CD4-positive, alpha-beta T cell (primary cell): ENCODE measurements at regions of chr20 and their contacts with region 1.

Region 1: DNA sequence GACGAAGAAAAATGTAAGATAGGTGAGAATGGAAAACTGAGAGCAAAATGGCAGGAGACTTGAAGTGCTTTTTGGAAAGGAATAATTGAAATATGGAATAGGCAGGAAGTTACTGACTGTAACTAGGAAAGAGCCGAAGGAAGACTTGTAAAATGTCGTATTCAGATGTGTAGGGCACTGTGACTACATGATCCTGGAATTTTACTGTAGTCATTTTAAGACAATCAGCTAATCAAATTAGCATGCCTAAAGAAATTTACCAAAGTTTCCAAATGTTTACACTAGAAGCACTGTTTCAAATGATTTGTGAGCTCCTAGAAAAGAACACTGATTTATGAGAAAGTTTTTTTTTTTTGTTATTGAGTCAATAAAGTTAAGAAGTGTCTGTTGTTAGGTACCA is 21.2 kb upstream of the ADIG start:
- DNase-seq: no peak
- ATAC-seq: no peak
- H3K4me3 ChIP-seq: no peak overlapping the region
- H3K4me3 Mint-ChIP-seq: no peak overlapping the region
- H3K27ac ChIP-seq: no peak overlapping the region
- H3K27ac Mint-ChIP-seq: no peak overlapping the region
- H3K4me1 ChIP-seq: no peaks in the 10 kb centered on the region
- H3K4me1 Mint-ChIP-seq: no peaks in the 10 kb centered on the region
- H3K27me3 ChIP-seq: no peaks in the 10 kb centered on the region
- H3K27me3 Mint-ChIP-seq: no peaks in the 10 kb centered on the region
- CTCF ChIP-seq: no peak

Region 2: GRCh38 chr20:38523697-38524096 is 36.1 kb before region 1 on chr20:
- CTCF ChIA-PET with region 1: no interaction called
- POLR2A ChIA-PET with region 1: no interaction called
- intact Hi-C with region 1: loop called in 1 of 2 experiments (anchors 5 kb)
- DNase-seq: no peak
- ATAC-seq: no peak
- H3K4me3 ChIP-seq: no peak overlapping the region
- H3K4me3 Mint-ChIP-seq: no peak overlapping the region
- H3K27ac ChIP-seq: no peak overlapping the region
- H3K27ac Mint-ChIP-seq: no peak overlapping the region
- H3K4me1 ChIP-seq: no peaks in the 10 kb centered on the region
- H3K4me1 Mint-ChIP-seq: no peaks in the 10 kb centered on the region
- H3K27me3 ChIP-seq: no peaks in the 10 kb centered on the region
- H3K27me3 Mint-ChIP-seq: no peaks in the 10 kb centered on the region
- CTCF ChIP-seq: no peak

Region 3: GRCh38 chr20:38581013-38581412 is 21.2 kb after region 1 on chr20 and contains the start of gene ADIG:
- CTCF ChIA-PET with region 1: no interaction called
- POLR2A ChIA-PET with region 1: no interaction called
- intact Hi-C with region 1: no loop called
- DNase-seq: no peak
- ATAC-seq: no peak
- H3K4me3 ChIP-seq: no peak within 1 kb of the TSS
- H3K4me3 Mint-ChIP-seq: no peak within 1 kb of the TSS
- H3K27ac ChIP-seq: no peak within 1 kb of the TSS
- H3K27ac Mint-ChIP-seq: no peak within 1 kb of the TSS
- H3K4me1 ChIP-seq: no peaks in the 10 kb centered on the region
- H3K4me1 Mint-ChIP-seq: no peaks in the 10 kb centered on the region
- H3K27me3 ChIP-seq: peaks cover 0 to 5% of the 10 kb centered on the region in 2 experiments
- H3K27me3 Mint-ChIP-seq: no peaks in the 10 kb centered on the region
- CTCF ChIP-seq: no peak
- total RNA-seq, gene ADIG: not detected